Dendritic cell treated with granulocyte-macrophage colony-stimulating factor and Interleukin-4, amounts not matched to agents 40 ng/mL and 50 ng/mL, for 4 days (primary cell): ENCODE measurements at regions of chr1 and their contacts with region 1.

Region 1: GRCh38 chr1:85707990-85708828 is at the start of gene ZNHIT6:
- H3K4me3 Mint-ChIP-seq: no peak within 1 kb of the TSS
- H3K27ac Mint-ChIP-seq: no peak within 1 kb of the TSS
- H3K4me1 Mint-ChIP-seq: peaks cover 6% of the 10 kb centered on the region
- H3K27me3 Mint-ChIP-seq: no peaks in the 10 kb centered on the region

Region 2: DNA sequence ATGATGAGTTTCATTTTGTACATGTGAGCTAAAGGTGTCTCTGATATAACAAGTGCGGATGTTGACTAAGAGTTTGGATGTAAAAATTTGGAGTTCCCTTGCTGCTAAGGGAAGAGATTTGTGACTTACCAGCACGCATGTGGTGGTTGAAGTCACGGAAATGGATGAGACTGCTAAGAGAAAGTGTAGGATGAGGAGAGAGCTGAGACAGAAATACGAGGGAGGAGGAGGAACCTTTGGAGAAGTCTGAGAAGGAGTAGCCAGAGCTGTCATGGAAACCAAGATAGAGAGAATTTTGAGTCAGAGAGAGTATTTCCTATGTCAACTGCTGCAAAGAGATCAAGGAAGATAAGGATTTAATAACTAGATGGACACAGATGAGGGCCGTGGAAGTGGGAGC is 554.9 kb after region 1 on chr1:
- intact Hi-C with region 1: loop called (anchors 5 kb)
- H3K4me3 Mint-ChIP-seq: no peak overlapping the region
- H3K27ac Mint-ChIP-seq: no peak overlapping the region
- H3K4me1 Mint-ChIP-seq: no peaks in the 10 kb centered on the region
- H3K27me3 Mint-ChIP-seq: no peaks in the 10 kb centered on the region